ENCODE measurements at regions of chr1 and their contacts with region 1.

Region 1: DNA sequence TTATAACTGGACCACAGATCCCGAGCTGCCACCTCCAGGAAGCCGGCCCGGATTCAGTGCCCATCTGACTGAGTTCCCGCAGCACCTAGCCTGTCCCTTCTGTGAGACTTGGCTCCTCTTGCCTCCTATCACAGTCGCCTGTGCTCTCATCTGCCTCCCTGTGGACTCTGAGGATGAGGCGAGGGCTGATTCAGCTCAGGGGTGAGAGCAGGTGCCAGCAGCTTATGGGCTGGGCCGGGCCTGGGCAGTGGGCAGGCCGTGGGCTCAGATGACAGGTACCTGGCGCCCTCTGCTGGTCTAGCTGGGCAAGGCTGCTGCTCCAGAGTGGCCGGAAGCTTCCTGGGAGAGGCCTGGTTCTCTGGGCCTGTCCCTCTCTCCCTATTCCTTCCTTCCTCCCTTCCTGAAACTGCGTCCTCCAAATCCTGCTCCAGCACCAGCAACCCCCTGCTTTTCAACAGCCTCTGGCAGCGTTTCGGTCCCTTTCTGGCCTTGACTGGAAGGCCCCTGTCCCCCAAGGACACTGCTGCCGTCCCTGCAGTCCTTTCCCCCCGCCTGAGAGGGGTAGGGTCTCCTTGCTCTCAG is 17.3 kb upstream of the PCSK9 start:
- DNase-seq: peak; percentile 88
- H3K4me3 ChIP-seq: no peak overlapping the region
- H3K27ac ChIP-seq: no peak overlapping the region
- H3K4me1 ChIP-seq: no peaks in the 10 kb centered on the region
- H3K27me3 ChIP-seq: no peaks in the 10 kb centered on the region
- CTCF ChIP-seq: peak; percentile 86 to 97

Region 2: DNA sequence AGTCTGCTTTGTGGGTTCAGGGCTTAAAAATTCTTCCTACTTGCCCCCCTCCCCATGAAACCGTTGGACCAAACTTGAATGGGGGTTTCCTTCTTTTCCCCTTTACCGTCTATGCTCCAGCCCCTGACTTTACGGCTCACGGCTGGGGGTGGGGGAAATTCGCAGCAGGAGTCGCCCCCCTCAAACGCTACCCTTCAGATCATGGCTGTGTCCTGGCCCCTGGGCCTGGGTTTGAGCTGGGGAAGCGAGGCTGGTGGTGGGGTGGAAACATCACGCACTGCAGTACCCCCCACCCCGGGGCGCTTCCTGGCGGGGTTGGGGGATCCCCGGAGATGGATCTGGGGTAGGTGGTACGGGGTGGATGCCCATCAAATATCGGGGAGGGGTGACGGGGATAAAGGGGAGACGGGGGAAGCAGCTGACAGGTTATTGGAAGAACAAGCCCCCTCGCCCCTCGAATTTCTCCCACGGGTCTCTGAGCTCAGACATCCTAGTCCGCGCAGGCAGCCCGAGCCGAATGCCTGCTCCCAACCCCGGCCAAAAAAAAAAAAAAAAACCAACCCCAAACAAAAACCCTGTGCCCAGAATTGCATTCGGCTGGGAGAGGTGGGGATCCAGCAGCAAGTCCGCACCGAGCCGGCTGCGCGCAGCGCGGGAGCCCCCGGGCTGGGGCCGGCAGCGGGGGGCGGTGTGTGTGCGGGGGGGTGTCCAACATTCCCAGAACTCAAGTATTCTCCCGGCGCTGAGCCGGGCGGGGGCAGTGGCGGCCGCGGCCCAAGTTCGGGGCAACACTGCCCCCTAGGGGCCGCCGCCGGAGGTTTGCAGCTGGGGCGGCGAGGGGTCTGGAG is 533.1 kb before region 1 on chr1:
- CTCF ChIA-PET with region 1: no interaction called
- dilution Hi-C with region 1: no loop called
- in situ Hi-C with region 1: no loop called
- intact Hi-C with region 1: no loop called
- DNase-seq: peak; percentile 60
- H3K4me3 ChIP-seq: peak overlapping the region; percentile 52 to 79 (median 58)
- H3K27ac ChIP-seq: peak overlapping the region; percentile 72
- H3K4me1 ChIP-seq: peaks cover 26% of the 10 kb centered on the region
- H3K27me3 ChIP-seq: no peaks in the 10 kb centered on the region
- CTCF ChIP-seq: peak; percentile 44 to 90

Region 3: GRCh38 chr1:54810100-54810942 is 211.7 kb before region 1 on chr1:
- CTCF ChIA-PET with region 1: no interaction called
- dilution Hi-C with region 1: no loop called
- in situ Hi-C with region 1: no loop called
- intact Hi-C with region 1: loop called (anchors 5 kb)
- DNase-seq: peak; percentile 38
- H3K4me3 ChIP-seq: no peak overlapping the region
- H3K27ac ChIP-seq: no peak overlapping the region
- H3K4me1 ChIP-seq: peaks cover 14% of the 10 kb centered on the region
- H3K27me3 ChIP-seq: no peaks in the 10 kb centered on the region
- CTCF ChIP-seq: peak; percentile 92 to 97

Region 4: DNA sequence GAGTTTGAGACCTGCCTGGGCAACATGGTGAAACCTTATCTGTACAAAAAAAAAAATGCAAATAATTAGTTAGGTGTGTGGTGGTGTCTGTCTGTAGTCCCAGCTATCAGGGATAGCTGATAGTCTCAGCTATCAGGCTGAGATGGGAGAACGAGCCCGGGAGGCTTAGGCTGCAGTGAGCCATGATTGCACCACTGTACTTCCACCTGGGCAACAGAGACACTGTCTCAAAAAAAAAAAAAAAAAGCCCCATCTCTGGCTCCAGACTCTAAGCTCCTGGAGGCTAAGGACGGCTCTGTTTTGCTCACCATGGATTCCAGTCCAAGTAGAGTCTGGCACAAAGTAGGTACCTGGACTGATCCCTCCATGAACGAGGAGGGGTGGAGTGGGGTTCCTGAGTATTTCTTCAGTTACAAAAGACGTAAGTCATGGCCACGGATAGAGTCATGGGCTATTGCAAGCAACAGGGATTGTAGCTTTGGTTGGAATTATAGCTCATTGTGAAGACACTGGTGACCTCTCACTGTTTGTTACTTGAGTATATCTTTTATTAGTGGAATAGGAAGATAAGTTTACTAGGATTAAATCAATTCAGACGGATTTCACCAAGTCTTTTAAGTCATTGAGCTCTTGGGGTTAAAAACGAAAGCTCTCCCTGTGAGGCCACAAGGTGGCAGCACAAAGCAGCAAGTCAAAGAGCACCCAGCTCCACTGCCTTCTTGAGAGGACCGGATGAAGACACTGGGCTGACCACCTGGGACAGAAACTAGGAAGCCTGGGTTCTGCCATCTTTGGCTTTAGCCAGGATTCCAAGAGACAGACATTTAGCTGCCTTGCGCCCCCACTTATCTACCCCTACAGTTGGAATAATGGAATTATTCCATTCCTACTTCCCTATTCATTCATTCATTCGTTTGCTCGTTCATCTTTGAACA is 77.2 kb before region 1 on chr1:
- CTCF ChIA-PET with region 1: interaction called, 49 read pairs
- dilution Hi-C with region 1: no loop called
- in situ Hi-C with region 1: no loop called
- intact Hi-C with region 1: loop called (anchors 1 kb)
- DNase-seq: peak; percentile 60
- H3K4me3 ChIP-seq: peak overlapping the region in 1 of 3 experiments; percentile 3
- H3K27ac ChIP-seq: no peak overlapping the region
- H3K4me1 ChIP-seq: peaks cover 12% of the 10 kb centered on the region
- H3K27me3 ChIP-seq: no peaks in the 10 kb centered on the region
- CTCF ChIP-seq: peak; percentile 88 to 89

Region 5: DNA sequence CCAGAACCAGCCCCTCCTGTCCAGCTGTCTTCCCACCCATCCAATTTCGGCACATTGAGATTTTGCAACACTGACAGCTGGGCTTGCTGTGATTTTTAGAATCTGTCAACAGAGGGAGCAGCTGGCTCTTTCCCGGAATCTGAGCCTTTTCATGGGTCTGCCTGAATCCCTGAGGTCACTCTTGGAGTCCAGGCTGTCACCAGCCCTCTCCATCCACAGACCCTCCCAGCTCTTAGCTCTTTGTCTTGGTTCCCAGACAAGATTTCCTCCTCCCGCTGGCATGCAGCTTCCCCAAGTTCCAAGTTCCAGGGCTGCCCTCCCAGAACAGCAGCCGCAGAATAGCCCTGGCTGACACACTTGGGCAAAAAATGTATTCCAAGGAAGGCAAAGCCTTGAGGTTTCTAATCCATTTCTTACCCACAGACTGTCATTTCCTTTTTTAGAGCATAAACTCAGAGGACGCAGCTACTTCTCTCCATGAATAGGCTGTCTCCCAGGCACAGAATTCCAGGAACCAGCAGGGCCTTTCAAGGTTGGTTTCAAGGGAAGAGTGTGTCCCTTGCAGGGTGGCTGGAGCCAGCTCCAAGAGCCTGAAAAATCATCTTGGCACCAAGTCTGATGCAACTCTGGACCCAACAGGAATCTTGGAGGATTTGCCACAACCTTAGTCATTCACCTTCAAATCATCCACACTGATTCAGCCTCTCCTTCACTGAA is 48.7 kb before region 1 on chr1:
- CTCF ChIA-PET with region 1: no interaction called
- dilution Hi-C with region 1: no loop called
- in situ Hi-C with region 1: no loop called
- intact Hi-C with region 1: loop called (anchors 1 kb)
- DNase-seq: no peak
- H3K4me3 ChIP-seq: no peak overlapping the region
- H3K27ac ChIP-seq: no peak overlapping the region
- H3K4me1 ChIP-seq: peaks cover 33% of the 10 kb centered on the region
- H3K27me3 ChIP-seq: no peaks in the 10 kb centered on the region
- CTCF ChIP-seq: peak; percentile 31 to 59

Region 6: DNA sequence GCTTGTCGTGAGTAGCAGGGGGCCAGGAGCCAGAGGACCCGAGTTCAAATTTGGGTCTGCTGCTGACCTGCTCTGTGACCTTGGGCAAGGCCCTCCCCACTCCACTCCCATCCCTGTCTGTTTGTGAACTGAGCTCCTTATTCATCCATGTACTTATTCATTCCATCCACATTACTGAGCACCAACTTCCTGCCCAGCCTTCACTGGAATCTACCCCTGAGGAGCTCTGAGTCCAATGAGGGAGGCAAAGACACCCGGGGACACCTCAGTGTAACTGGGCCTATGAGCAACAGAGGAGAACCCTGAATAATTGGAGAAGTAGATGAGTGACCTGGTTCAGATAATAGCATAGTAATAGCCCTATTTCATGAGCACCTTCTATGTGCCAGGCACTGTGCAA is 14.4 kb before region 1 on chr1:
- CTCF ChIA-PET with region 1: interaction called, 13 read pairs
- dilution Hi-C with region 1: no loop called
- in situ Hi-C with region 1: no loop called
- intact Hi-C with region 1: loop called (anchors 2 kb)
- DNase-seq: peak; percentile 79
- H3K4me3 ChIP-seq: no peak overlapping the region
- H3K27ac ChIP-seq: peak overlapping the region; percentile 14
- H3K4me1 ChIP-seq: peaks cover 14% of the 10 kb centered on the region
- H3K27me3 ChIP-seq: no peaks in the 10 kb centered on the region
- CTCF ChIP-seq: no peak